CD4-positive, alpha-beta T cell (primary cell): ENCODE measurements at regions of chr6 and their contacts with region 1.

Region 1: DNA sequence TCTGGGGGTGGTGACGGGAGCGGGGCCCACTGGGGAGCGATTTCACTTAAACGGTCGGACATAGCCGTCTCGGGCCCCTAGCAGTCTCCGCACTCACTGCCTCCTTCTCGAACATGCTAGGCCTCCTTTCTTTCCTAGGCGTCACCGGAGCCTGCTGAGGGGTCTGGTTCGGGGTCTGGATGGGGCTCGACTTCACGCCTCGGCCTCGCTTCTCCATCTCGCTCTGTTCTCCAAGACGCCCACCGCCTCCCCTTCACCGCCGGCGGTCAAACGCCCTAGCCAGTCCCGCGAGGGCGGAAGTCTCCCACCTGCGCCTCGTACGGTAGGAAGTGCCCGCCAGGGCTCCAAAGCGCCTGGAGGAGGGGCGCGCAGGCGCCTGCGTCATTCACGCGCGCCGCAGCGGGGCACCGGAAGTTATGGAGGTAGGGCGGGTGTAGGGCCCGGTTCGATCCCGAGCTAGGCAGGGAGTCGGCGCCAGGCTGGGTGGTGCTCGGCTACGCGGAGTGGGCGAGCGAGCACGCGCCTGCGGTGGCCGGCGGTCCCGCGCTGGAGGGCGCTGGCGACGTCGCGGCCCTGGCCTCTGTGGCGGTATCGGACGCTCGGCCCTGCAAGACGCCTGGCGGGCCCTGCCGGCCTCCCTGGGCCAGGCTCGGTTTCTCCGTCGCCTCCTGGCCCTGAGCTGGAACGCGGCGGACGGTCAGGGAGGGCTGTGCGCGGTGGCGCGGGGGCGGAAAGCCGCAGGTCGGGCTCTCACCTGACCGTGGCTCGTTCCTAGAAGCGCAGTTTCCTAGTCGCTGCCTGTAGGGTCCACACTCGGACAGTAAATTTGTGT is at the starts of genes DYNLT2 and ERMARD:
- DNase-seq: peak; percentile 85 to 96 (median 91)
- ATAC-seq: peak; percentile 93
- H3K4me3 ChIP-seq: peak within 1 kb of the TSS; percentile 87
- H3K4me3 Mint-ChIP-seq: peak within 1 kb of the TSS; percentile 99
- H3K27ac ChIP-seq: peak within 1 kb of the TSS; percentile 92 to 94
- H3K27ac Mint-ChIP-seq: peak within 1 kb of the TSS; percentile 100
- H3K4me1 ChIP-seq: peaks cover 14% of the 10 kb centered on the region
- H3K4me1 Mint-ChIP-seq: peaks cover 39% of the 10 kb centered on the region
- H3K27me3 ChIP-seq: no peaks in the 10 kb centered on the region
- H3K27me3 Mint-ChIP-seq: no peaks in the 10 kb centered on the region
- CTCF ChIP-seq: no peak
- total RNA-seq, gene DYNLT2: 4.1 to 4.3 TPM
- total RNA-seq, gene ERMARD: 24.2 to 26.2 TPM

Region 2: DNA sequence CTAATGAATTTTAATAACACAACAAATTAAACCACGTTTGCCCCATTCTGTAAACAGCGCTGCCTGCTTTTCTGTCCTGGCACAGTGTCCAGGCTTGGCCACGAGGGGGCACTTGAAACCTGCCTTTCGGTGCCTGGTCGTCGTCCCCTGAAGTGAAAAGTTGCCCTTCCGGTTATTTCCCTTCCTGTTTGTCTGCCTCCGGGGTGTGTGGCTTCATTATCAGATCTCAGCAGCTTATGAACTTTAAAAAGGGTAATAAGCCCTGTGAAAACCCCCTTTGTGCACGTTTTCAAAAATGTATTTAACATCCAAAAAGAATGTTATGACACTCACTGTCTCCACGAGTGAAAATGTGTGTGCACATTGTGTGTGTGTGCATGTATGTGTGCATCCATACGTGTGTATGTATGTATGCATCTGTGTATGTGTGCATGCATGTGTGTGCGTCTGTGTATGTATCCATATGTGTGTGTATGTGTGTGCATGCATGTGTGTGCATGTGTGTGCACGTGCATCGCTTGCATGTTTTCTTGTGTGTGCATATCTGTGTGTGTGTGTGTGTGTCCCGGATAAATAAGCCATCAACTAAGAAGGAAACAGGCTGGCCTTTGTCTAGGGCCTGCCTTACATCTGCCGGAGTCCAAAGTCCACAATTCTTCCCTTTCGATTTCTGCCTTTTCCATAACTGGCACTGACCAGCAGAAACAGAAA is 856.2 kb before region 1 on chr6:
- CTCF ChIA-PET with region 1: no interaction called
- POLR2A ChIA-PET with region 1: no interaction called
- intact Hi-C with region 1: loop called in 1 of 2 experiments (anchors 10 kb)
- DNase-seq: peak; percentile 62 to 87 (median 74)
- ATAC-seq: peak; percentile 96
- H3K4me3 ChIP-seq: peak overlapping the region; percentile 28
- H3K4me3 Mint-ChIP-seq: peak overlapping the region; percentile 4
- H3K27ac ChIP-seq: no peak overlapping the region
- H3K27ac Mint-ChIP-seq: no peak overlapping the region
- H3K4me1 ChIP-seq: peaks cover 8% of the 10 kb centered on the region
- H3K4me1 Mint-ChIP-seq: peaks cover 15% of the 10 kb centered on the region
- H3K27me3 ChIP-seq: no peaks in the 10 kb centered on the region
- H3K27me3 Mint-ChIP-seq: no peaks in the 10 kb centered on the region
- CTCF ChIP-seq: peak; percentile 83

Region 3: DNA sequence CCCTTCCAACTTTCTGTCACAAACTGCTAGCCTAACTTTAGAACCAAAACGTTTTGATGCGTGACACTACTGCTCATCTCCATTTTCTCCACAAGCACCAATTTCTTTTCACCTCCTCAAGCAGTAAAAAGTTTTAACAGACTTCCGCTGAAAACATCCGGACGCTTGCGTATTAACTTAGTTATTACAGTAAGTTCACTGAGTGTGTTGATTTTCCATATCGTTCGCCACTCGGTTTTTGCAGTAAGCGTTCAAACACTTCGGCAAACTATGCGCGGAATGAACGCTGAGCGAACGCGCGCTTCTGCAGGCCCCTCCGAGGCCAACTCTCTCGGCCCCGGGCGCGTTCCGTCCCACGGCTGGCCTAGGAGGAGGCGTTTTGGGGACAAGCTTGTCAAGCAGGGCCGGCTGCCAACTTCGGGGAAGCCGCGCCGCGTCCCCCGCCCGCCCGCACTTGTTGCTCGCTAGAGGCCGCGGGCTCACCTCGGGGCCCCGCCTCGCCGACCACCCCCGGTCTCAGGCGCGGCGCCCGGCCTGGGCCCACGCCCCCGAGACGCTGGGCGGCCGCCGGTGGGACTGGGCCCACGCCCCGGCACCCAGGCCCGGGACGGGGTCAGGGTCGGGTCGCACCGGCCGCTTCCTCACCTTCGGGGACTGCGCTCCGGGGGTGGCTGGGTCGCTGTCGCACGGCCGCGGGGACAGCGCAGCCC is 28.1 kb before region 1 on chr6:
- CTCF ChIA-PET with region 1: interaction called, 5 read pairs
- POLR2A ChIA-PET with region 1: interaction called, 111 read pairs
- intact Hi-C with region 1: loop called (anchors 1 kb)
- DNase-seq: peak; percentile 47 to 85 (median 64)
- ATAC-seq: peak; percentile 38
- H3K4me3 ChIP-seq: peak overlapping the region; percentile 79
- H3K4me3 Mint-ChIP-seq: peak overlapping the region; percentile 90
- H3K27ac ChIP-seq: peak overlapping the region; percentile 66 to 81
- H3K27ac Mint-ChIP-seq: peak overlapping the region; percentile 94
- H3K4me1 ChIP-seq: peaks cover 17% of the 10 kb centered on the region
- H3K4me1 Mint-ChIP-seq: peaks cover 58% of the 10 kb centered on the region
- H3K27me3 ChIP-seq: no peaks in the 10 kb centered on the region
- H3K27me3 Mint-ChIP-seq: no peaks in the 10 kb centered on the region
- CTCF ChIP-seq: no peak

Region 4: GRCh38 chr6:169780571-169781091 is 29.2 kb after region 1 on chr6:
- CTCF ChIA-PET with region 1: no interaction called
- POLR2A ChIA-PET with region 1: no interaction called
- intact Hi-C with region 1: no loop called
- DNase-seq: no peak
- ATAC-seq: no peak
- H3K4me3 ChIP-seq: no peak overlapping the region
- H3K4me3 Mint-ChIP-seq: no peak overlapping the region
- H3K27ac ChIP-seq: no peak overlapping the region
- H3K27ac Mint-ChIP-seq: no peak overlapping the region
- H3K4me1 ChIP-seq: no peaks in the 10 kb centered on the region
- H3K4me1 Mint-ChIP-seq: no peaks in the 10 kb centered on the region
- H3K27me3 ChIP-seq: no peaks in the 10 kb centered on the region
- H3K27me3 Mint-ChIP-seq: no peaks in the 10 kb centered on the region
- CTCF ChIP-seq: no peak

Region 5: GRCh38 chr6:170584181-170584953 is 832.9 kb after region 1 on chr6 and contains the start of gene PDCD2:
- CTCF ChIA-PET with region 1: no interaction called
- POLR2A ChIA-PET with region 1: interaction called, 8 read pairs
- intact Hi-C with region 1: loop called in 1 of 2 experiments (anchors 2 kb)
- DNase-seq: peak; percentile 82 to 96 (median 88)
- ATAC-seq: peak; percentile 94
- H3K4me3 ChIP-seq: peak within 1 kb of the TSS; percentile 74
- H3K4me3 Mint-ChIP-seq: peak within 1 kb of the TSS; percentile 97
- H3K27ac ChIP-seq: peak within 1 kb of the TSS; percentile 69 to 92
- H3K27ac Mint-ChIP-seq: peak within 1 kb of the TSS; percentile 96
- H3K4me1 ChIP-seq: peaks cover 15% of the 10 kb centered on the region
- H3K4me1 Mint-ChIP-seq: peaks cover 38% of the 10 kb centered on the region
- H3K27me3 ChIP-seq: no peaks in the 10 kb centered on the region
- H3K27me3 Mint-ChIP-seq: no peaks in the 10 kb centered on the region
- CTCF ChIP-seq: no peak
- total RNA-seq, gene PDCD2: 56.9 to 57.1 TPM